ENCODE measurements at regions of chr12 and their contacts with region 1.

Region 1: GRCh38 chr12:49069507-49070346 is at the start of gene RHEBL1:
- DNase-seq: peak; percentile 90
- ATAC-seq: peak; percentile 99
- H3K4me3 ChIP-seq: peak within 1 kb of the TSS; percentile 70 to 71
- H3K27ac ChIP-seq: peak within 1 kb of the TSS; percentile 70
- H3K4me1 ChIP-seq: peaks cover 5 to 15% of the 10 kb centered on the region in 2 experiments
- H3K27me3 ChIP-seq: no peaks in the 10 kb centered on the region
- CTCF ChIP-seq: peak in 2 of 3 experiments; percentile 10 to 25; a peak in 1 of 6 replicates
- POLR2A ChIP-seq: no peak
- RAD21 ChIP-seq: no peak
- total RNA-seq, gene RHEBL1: 2.8 TPM

Region 2: DNA sequence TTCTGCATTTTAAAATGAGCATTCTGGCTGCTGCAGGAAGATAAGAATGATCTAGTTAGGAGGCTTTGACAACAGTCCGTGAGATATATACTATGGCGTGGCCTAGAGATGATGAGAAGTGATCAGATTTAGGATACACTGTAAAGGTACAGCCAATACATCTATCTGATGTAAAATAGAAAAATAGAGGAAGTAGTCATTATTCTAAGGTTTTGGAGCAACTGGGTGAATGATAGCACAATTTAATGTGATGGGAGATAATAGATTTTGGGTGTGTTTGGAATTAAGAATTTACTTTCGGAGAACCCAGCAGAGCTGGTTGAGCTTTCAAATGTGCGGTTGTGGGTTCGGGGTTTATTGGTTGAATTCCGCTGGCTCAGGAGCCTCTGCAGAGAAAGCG is 597.5 kb before region 1 on chr12 and contains the start of gene ANP32D:
- CTCF ChIA-PET with region 1: no interaction called
- POLR2A ChIA-PET with region 1: no interaction called
- RAD21 ChIA-PET with region 1: no interaction called
- intact Hi-C with region 1: no loop called
- DNase-seq: no peak
- ATAC-seq: no peak
- H3K4me3 ChIP-seq: no peak within 1 kb of the TSS
- H3K27ac ChIP-seq: no peak within 1 kb of the TSS
- H3K4me1 ChIP-seq: no peaks in the 10 kb centered on the region
- H3K27me3 ChIP-seq: no peaks in the 10 kb centered on the region
- CTCF ChIP-seq: no peak
- POLR2A ChIP-seq: no peak
- RAD21 ChIP-seq: no peak
- total RNA-seq, gene ANP32D: not detected

Region 3: GRCh38 chr12:49098035-49098451 is 28.3 kb after region 1 on chr12:
- CTCF ChIA-PET with region 1: interaction called, 29 read pairs
- POLR2A ChIA-PET with region 1: no interaction called
- RAD21 ChIA-PET with region 1: no interaction called
- intact Hi-C with region 1: no loop called
- DNase-seq: no peak
- ATAC-seq: peak; percentile 82
- H3K4me3 ChIP-seq: no peak overlapping the region
- H3K27ac ChIP-seq: no peak overlapping the region
- H3K4me1 ChIP-seq: no peaks in the 10 kb centered on the region
- H3K27me3 ChIP-seq: no peaks in the 10 kb centered on the region
- CTCF ChIP-seq: peak; percentile 52 to 84 (median 79); a peak in 5 of 6 replicates
- POLR2A ChIP-seq: no peak
- RAD21 ChIP-seq: peak; percentile 53

Region 4: DNA sequence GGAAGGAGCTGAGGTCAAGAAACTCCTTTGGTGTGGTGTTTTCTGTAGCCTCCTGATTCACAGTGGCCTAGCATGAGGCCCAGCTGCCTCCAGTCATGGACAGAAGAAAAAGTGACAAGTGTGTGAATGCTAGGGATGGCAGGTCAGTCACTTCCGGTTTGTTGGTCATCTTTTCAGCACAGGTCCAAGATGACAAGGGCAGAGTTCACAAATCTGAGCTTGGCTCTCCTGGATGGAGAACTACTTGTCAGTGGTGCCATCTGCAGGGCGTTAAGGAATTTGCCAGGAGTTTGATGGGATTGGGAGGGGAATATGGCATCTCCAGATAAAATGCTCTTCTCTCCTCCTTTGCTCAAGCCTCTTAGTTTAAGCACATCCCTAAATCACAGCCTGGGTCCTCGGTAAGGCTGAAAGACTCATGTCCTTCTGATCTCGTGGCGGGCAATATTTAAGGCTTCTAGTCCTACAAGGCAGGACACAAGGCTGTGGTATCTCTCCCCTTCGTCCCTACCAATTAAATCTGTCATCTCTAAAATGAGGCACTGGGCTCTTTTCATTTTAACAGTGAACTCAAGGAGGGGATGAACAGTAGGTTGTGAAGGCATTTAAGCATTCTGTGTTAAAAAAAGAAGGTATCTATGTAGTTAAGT is 51.4 kb after region 1 on chr12:
- CTCF ChIA-PET with region 1: interaction called, 28 read pairs
- POLR2A ChIA-PET with region 1: no interaction called
- RAD21 ChIA-PET with region 1: interaction called in 1 of 2 experiments, 3 read pairs
- intact Hi-C with region 1: loop called (anchors 1 kb)
- DNase-seq: peak; percentile 69
- ATAC-seq: peak; percentile 95
- H3K4me3 ChIP-seq: no peak overlapping the region
- H3K27ac ChIP-seq: no peak overlapping the region
- H3K4me1 ChIP-seq: peaks cover 2 to 7% of the 10 kb centered on the region in 2 experiments; a peak in 1 of 4 replicates
- H3K27me3 ChIP-seq: no peaks in the 10 kb centered on the region
- CTCF ChIP-seq: peak; percentile 70 to 79 (median 77); a peak in 5 of 6 replicates
- POLR2A ChIP-seq: no peak
- RAD21 ChIP-seq: peak; percentile 86

Region 5: GRCh38 chr12:49232940-49233841 is 163.5 kb after region 1 on chr12:
- CTCF ChIA-PET with region 1: interaction called, 22 read pairs
- POLR2A ChIA-PET with region 1: no interaction called
- RAD21 ChIA-PET with region 1: no interaction called
- intact Hi-C with region 1: loop called (anchors 1 kb)
- DNase-seq: no peak
- ATAC-seq: no peak
- H3K4me3 ChIP-seq: no peak overlapping the region
- H3K27ac ChIP-seq: no peak overlapping the region
- H3K4me1 ChIP-seq: peaks cover 4 to 17% of the 10 kb centered on the region in 2 experiments; a peak in 3 of 4 replicates
- H3K27me3 ChIP-seq: no peaks in the 10 kb centered on the region
- CTCF ChIP-seq: no peak
- POLR2A ChIP-seq: no peak
- RAD21 ChIP-seq: no peak